MCF 10A (cell line): ENCODE measurements at regions of chr10 and their contacts with region 1.

Region 1: DNA sequence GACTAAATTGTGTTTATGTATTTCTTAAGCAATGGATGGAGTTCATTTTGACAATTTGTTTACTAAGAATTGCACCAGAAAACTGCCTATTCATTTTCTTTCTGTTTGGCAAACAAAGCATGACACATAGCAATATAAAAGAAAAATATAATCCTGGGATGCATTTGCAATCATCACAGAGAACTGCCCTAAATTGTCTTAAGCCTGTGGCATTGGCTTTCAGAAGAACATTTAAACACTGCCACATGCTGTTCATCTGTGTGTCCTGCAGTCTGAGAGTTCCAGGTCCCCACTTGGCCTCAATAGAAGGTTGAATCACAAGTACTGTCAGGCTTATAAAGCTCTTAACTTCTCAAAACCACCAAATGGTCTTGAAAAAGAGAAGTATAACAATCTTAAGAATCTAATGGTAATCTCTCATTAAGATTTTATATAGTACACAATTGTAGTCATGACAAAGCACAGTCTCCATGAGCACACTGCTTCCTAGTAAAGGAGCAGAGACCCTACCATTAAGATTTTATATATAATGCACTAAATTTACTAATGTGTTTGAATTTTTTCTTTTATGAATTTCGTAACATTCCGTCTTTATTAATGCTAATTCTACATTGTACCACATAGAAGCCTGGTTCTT is 29.9 kb downstream of the RNLS start:
- DNase-seq: peak; percentile 77
- H3K4me3 Mint-ChIP-seq: no peak overlapping the region
- H3K27ac Mint-ChIP-seq: no peak overlapping the region
- H3K4me1 Mint-ChIP-seq: peaks cover 16% of the 10 kb centered on the region
- H3K27me3 Mint-ChIP-seq: no peaks in the 10 kb centered on the region
- CTCF ChIP-seq: peak; percentile 69

Region 2: DNA sequence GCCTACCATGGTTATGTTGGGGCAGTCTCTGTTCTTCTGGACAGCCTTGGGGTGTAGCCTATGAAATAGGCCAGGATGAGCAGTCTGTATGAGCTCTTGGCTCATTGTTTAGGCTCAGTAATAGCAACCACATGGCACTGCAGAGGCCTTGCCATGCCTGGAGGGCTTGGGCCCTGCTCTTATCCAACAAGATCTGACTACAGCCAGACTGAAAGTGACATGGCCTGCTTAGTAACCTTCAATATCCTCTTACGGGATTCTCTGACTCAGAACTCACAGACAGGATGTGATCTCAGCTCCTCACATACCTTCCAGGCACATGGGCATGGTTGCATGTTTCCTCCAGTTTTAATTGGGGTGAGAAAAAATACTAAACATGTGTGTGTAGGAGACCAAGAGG is 400.5 kb before region 1 on chr10:
- CTCF ChIA-PET with region 1: no interaction called
- POLR2A ChIA-PET with region 1: no interaction called
- intact Hi-C with region 1: loop called (anchors 10 kb)
- DNase-seq: peak; percentile 95
- H3K4me3 Mint-ChIP-seq: no peak overlapping the region
- H3K27ac Mint-ChIP-seq: peak overlapping the region; percentile 91
- H3K4me1 Mint-ChIP-seq: peaks cover 35% of the 10 kb centered on the region
- H3K27me3 Mint-ChIP-seq: no peaks in the 10 kb centered on the region
- CTCF ChIP-seq: no peak

Region 3: GRCh38 chr10:88401671-88402347 is 151.4 kb before region 1 on chr10:
- CTCF ChIA-PET with region 1: interaction called, 11 read pairs
- POLR2A ChIA-PET with region 1: interaction called, 9 read pairs
- intact Hi-C with region 1: loop called (anchors 1 kb)
- DNase-seq: peak; percentile 32
- H3K4me3 Mint-ChIP-seq: no peak overlapping the region
- H3K27ac Mint-ChIP-seq: no peak overlapping the region
- H3K4me1 Mint-ChIP-seq: peaks cover 14% of the 10 kb centered on the region
- H3K27me3 Mint-ChIP-seq: no peaks in the 10 kb centered on the region
- CTCF ChIP-seq: peak; percentile 33

Region 4: GRCh38 chr10:88467835-88468485 is 85.3 kb before region 1 on chr10:
- CTCF ChIA-PET with region 1: interaction called, 37 read pairs
- POLR2A ChIA-PET with region 1: interaction called, 11 read pairs
- intact Hi-C with region 1: loop called (anchors 1 kb)
- DNase-seq: no peak
- H3K4me3 Mint-ChIP-seq: no peak overlapping the region
- H3K27ac Mint-ChIP-seq: no peak overlapping the region
- H3K4me1 Mint-ChIP-seq: peaks cover 18% of the 10 kb centered on the region
- H3K27me3 Mint-ChIP-seq: no peaks in the 10 kb centered on the region
- CTCF ChIP-seq: no peak

Region 5: DNA sequence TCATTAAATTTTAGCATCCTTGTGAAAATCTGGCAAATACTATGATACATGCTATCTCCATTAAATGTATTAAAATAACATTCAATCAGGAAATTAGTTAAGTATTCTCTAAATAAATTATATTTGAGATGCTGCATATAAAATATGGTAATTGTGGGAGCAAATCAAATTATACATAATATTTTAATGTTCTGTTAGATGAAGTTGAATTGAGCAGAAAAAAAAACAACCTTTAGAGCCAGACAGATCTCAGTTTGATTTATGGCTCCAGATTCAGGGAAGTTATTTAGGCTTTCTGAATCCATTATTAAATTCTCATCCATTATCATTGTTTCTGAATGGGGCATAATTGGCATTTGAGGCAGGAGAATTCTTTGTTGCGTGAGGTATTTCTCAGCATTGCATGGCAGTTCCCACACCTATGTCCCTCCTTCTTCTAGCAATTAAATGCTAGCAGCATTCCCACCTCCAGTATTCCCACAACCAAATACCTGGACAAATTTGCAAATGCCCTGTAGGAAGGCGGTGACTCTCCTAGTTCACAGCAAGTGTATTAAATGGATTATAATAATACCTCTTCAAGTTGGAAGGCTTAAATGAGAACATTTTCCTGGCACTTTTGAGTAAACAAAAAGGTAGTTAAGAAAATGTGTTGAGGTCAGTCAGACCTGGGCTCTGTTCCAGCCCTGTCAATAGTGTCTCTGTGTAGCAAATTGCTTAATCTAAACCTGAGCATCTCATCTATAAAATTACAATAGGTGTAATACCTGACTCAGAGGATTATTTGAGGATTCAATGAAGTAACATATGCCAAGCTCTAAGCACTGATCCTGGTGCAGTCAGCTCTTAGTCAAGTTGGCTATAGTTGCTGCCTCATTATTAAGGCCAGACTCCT is 79.0 kb before region 1 on chr10:
- CTCF ChIA-PET with region 1: interaction called, 37 read pairs
- POLR2A ChIA-PET with region 1: interaction called, 21 read pairs
- intact Hi-C with region 1: loop called (anchors 1 kb)
- DNase-seq: peak; percentile 95
- H3K4me3 Mint-ChIP-seq: peak overlapping the region; percentile 13
- H3K27ac Mint-ChIP-seq: peak overlapping the region; percentile 80
- H3K4me1 Mint-ChIP-seq: peaks cover 39% of the 10 kb centered on the region
- H3K27me3 Mint-ChIP-seq: no peaks in the 10 kb centered on the region
- CTCF ChIP-seq: no peak

Region 6: DNA sequence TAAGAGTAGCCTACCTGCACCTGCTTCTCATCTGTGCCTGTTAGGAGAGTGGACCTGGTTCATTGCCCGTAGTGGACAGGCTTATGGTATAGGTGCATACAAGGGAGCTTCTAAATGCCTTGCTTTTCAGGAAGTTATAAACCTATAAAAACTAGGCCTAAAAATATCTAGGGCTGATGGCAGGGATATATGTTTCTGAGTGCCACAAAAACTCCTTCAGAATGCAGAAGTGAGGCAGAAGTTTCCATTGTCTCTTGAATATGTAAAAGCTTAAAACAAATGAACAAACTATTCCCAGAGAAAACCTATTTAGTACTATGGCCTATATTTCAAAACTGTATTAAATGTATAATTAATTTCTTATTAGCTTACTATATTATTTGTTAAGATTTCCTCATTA is 61.9 kb before region 1 on chr10:
- CTCF ChIA-PET with region 1: no interaction called
- POLR2A ChIA-PET with region 1: no interaction called
- intact Hi-C with region 1: no loop called
- DNase-seq: no peak
- H3K4me3 Mint-ChIP-seq: no peak overlapping the region
- H3K27ac Mint-ChIP-seq: no peak overlapping the region
- H3K4me1 Mint-ChIP-seq: peaks cover 9% of the 10 kb centered on the region
- H3K27me3 Mint-ChIP-seq: no peaks in the 10 kb centered on the region
- CTCF ChIP-seq: no peak

Region 7: GRCh38 chr10:88541116-88541626 is 12.1 kb before region 1 on chr10:
- CTCF ChIA-PET with region 1: interaction called, 8 read pairs
- POLR2A ChIA-PET with region 1: interaction called, 19 read pairs
- intact Hi-C with region 1: no loop called
- DNase-seq: peak; percentile 38
- H3K4me3 Mint-ChIP-seq: peak overlapping the region; percentile 37
- H3K27ac Mint-ChIP-seq: peak overlapping the region; percentile 100
- H3K4me1 Mint-ChIP-seq: peaks cover 30% of the 10 kb centered on the region
- H3K27me3 Mint-ChIP-seq: no peaks in the 10 kb centered on the region
- CTCF ChIP-seq: no peak